Activated CD4-positive, alpha-beta T cell treated with anti-CD3 and anti-CD28 coated beads, Interleukin-2, amount 10 ng/mL, durations not matched to agents 24 days and 14 days (primary cell): ENCODE measurements at regions of chr6 and their contacts with region 1.

Region 1: GRCh38 chr6:118750143-118750542 is 98.8 kb upstream of the CEP85L start:
- DNase-seq: no peak
- H3K4me3 Mint-ChIP-seq: no peak overlapping the region
- H3K27ac Mint-ChIP-seq: no peak overlapping the region
- H3K4me1 Mint-ChIP-seq: peaks cover 15% of the 10 kb centered on the region
- H3K27me3 Mint-ChIP-seq: no peaks in the 10 kb centered on the region

Region 2: DNA sequence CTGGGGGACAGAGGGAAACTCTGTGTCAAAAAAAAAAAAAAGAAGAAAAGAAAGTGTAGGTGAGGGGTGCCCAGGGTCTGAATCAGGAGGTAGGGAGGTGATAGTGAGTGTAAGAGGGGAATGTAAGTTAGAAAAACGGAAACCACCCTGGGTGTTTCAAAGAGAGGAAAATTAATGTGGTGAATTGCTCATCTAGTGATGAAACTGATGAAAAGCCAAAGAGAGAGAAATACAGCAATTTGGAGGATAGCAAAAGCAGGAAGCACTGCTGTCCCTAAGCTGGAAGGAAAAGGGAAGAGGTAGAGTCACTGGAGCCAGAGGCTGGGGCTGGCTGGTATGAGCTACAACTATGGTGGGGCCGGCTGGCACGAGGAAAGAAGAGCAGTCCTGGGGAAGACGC is 13.7 kb before region 1 on chr6:
- intact Hi-C with region 1: loop called (anchors 2 kb)
- DNase-seq: no peak
- H3K4me3 Mint-ChIP-seq: peak overlapping the region; percentile 44
- H3K27ac Mint-ChIP-seq: peak overlapping the region; percentile 81
- H3K4me1 Mint-ChIP-seq: peaks cover 17% of the 10 kb centered on the region
- H3K27me3 Mint-ChIP-seq: no peaks in the 10 kb centered on the region